WTC11 (cell line): ENCODE measurements at regions of chr17 and their contacts with region 1.

Region 1: GRCh38 chr17:43940630-43941029 is 1.6 kb downstream of the PPY start:
- DNase-seq: peak; percentile 77
- ATAC-seq: peak; percentile 74
- H3K4me3 Mint-ChIP-seq: no peak overlapping the region
- H3K27ac Mint-ChIP-seq: no peak overlapping the region
- H3K4me1 Mint-ChIP-seq: peaks cover 20% of the 10 kb centered on the region
- H3K27me3 Mint-ChIP-seq: peaks cover 46% of the 10 kb centered on the region
- CTCF ChIP-seq: peak; percentile 56

Region 2: GRCh38 chr17:43900183-43900857 is 40.3 kb before region 1 on chr17:
- CTCF ChIA-PET with region 1: interaction called, 49 read pairs
- POLR2A ChIA-PET with region 1: no interaction called
- DNase-seq: peak; percentile 93
- ATAC-seq: peak; percentile 92
- H3K4me3 Mint-ChIP-seq: peak overlapping the region; percentile 75
- H3K27ac Mint-ChIP-seq: no peak overlapping the region
- H3K4me1 Mint-ChIP-seq: peaks cover 52% of the 10 kb centered on the region
- H3K27me3 Mint-ChIP-seq: peaks cover 32% of the 10 kb centered on the region
- CTCF ChIP-seq: no peak

Region 3: DNA sequence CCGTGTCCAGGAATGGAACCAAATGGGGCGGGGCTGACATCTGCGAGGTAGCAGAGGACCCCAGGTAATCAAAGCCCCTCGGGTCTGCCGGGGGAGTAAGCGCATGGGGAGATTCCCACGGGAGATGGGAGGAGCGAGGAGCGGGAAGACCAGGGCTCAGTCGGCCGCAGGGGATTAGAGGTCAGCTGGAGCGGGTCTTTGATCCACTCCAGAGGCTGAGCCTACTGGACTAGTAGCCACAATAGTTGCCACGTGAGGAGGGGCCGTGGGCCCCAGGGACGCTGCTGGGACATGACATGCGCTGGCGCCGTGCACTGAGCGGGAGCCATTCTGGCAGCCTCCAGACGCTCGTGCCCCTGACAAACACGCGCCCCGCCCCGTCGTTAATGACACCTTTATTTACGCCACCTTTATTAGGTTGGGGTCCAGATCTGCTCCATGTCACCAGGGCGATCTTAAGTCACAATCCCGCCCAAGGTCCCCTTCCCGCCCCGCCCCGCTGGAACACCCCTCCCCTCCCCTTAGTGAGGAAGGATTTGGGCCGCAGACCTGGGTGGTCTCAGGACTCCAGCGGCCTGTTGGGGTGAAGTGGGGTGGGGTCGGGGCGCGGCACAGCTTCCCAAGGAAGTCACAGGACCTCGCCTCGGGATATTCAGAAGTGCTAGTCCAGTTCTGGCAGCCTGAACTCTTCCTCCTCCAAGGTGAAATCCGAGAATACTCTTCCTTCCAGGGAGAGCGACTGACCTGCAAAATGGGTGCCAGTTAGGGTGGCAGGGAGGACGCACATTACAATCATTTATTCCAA is 13.4 kb before region 1 on chr17:
- CTCF ChIA-PET with region 1: interaction called, 24 read pairs
- POLR2A ChIA-PET with region 1: no interaction called
- DNase-seq: no peak
- ATAC-seq: no peak; the same call in 1 of the 2 replicates
- H3K4me3 Mint-ChIP-seq: peak overlapping the region; percentile 78
- H3K27ac Mint-ChIP-seq: no peak overlapping the region
- H3K4me1 Mint-ChIP-seq: peaks cover 12% of the 10 kb centered on the region
- H3K27me3 Mint-ChIP-seq: peaks cover 65% of the 10 kb centered on the region
- CTCF ChIP-seq: no peak

Region 4: DNA sequence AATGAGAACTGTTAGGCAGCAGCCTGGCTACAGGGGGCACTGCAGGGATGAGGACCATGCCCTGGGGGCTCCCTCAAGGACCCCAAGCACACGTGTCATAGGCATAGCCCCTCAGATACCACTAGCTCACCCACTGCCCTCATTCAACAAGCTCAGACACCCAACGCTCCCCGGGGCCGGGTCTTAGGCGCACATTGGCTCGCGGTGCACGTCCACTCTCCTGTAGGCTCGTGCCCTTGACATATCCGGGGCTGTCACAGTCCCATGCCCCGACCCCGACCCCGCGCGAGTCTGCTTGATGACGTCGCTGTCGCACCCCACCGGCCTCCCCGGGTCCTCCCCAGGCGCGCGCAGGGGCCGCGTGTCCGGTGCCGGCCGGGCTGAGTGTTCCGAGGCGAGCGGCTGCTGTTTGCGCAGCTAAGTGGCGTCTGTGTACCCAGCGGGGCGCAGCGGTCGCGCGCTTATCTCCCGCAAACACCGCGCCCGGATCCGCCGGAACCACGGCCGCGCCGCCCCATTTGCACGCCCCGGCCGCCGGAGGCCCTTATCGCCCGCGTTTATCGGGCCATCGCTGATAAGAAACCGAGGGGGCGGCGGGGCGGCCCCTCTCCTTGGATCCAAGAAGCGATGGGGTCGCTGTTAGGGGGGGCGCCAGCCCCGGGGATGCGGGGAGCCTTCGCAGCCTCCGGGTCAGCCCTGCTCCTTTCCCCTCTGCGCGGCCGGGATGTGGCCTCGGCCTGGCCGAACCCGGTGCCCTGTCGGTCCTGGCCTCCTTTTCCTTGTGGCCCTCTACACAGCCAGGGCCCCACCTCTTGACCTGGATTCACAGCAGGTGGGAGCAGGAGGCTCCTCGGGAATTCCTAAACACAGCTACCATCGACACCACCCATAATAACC is 43.1 kb after region 1 on chr17:
- CTCF ChIA-PET with region 1: interaction called, 58 read pairs
- POLR2A ChIA-PET with region 1: no interaction called
- DNase-seq: peak; percentile 65
- ATAC-seq: peak; percentile 75
- H3K4me3 Mint-ChIP-seq: peak overlapping the region; percentile 69
- H3K27ac Mint-ChIP-seq: no peak overlapping the region
- H3K4me1 Mint-ChIP-seq: peaks cover 4% of the 10 kb centered on the region; the same call in 1 of the 2 replicates
- H3K27me3 Mint-ChIP-seq: peaks cover 24% of the 10 kb centered on the region
- CTCF ChIP-seq: peak; percentile 41; the same call in 1 of the 2 replicates

Region 5: GRCh38 chr17:44044067-44044466 is 103.4 kb after region 1 on chr17:
- CTCF ChIA-PET with region 1: interaction called, 30 read pairs
- POLR2A ChIA-PET with region 1: interaction called, 3 read pairs
- DNase-seq: no peak
- ATAC-seq: no peak
- H3K4me3 Mint-ChIP-seq: no peak overlapping the region
- H3K27ac Mint-ChIP-seq: peak overlapping the region; percentile 70
- H3K4me1 Mint-ChIP-seq: peaks cover 16% of the 10 kb centered on the region
- H3K27me3 Mint-ChIP-seq: no peaks in the 10 kb centered on the region
- CTCF ChIP-seq: no peak